Heart right ventricle (tissue), 16 donors: ENCODE measurements at regions of chr20 and their contacts with region 1.

Region 1: DNA sequence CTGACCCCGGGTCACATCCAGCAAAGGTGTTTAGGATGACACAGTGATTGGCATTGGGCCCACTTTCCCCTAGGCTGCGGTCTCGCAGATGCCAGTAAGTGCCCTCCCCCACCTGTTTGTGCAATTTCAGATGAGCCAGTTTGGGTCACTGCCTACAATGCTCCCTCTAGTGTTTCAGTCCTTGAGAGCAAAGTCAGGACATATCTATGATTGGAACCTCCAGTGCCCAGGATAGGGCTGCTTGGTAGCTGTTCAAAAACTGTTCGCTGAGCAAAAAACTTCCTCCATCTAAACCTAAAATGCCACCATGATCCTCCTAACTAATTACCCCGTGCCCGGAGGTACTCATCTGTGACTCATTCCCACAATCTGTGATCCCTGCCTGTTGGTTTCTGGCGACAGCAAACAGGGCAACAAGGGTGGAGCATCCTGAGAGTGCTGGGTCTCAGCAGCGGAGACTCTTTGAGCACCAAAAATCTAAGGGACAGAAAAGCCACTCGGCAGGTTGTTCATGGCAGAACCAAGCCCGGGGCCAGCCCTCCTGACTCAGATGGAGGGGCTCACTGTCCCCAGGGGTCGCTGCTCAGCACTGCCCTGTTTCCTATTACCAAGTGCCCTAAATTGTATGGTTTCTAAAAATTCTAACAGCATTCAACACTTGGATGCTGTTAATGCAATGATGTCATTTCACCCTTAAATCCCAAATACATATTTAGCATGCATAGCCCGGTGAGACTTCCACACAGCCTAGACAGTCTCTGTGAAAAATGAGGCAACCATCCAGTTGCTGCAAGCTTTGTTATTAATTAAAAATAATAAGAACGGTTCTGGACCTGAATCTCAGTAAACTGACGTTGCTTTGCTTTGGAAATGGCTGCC is 5.0 kb downstream of the VSX1 start:
- DNase-seq: no peak
- ATAC-seq: peak in 7 of 8 donors; percentile 35 to 78 (median 47)
- H3K4me3 ChIP-seq: peak overlapping the region in 9 of 10 donors; percentile 5 to 50 (median 36)
- H3K27ac ChIP-seq: no peak overlapping the region
- H3K4me1 ChIP-seq: peaks cover 2 to 28% (median 21%) of the 10 kb centered on the region in 9 donors
- H3K27me3 ChIP-seq: peaks cover 15 to 98% (median 68%) of the 10 kb centered on the region in 7 donors
- CTCF ChIP-seq: peak in 6 of 9 donors; percentile 19 to 44 (median 24)

Region 2: GRCh38 chr20:25145131-25145530 is 68.2 kb after region 1 on chr20:
- intact Hi-C with region 1: loop called in 1 of 10 experiments (anchors 2 kb)
- DNase-seq: peak in 1 of 2 donors; percentile 34
- ATAC-seq: peak in 6 of 8 donors; percentile 28 to 78 (median 42)
- H3K4me3 ChIP-seq: no peak overlapping the region
- H3K27ac ChIP-seq: no peak overlapping the region
- H3K4me1 ChIP-seq: peaks cover 4 to 12% (median 8%) of the 10 kb centered on the region in 9 donors
- H3K27me3 ChIP-seq: peaks cover 4 to 60% (median 39%) of the 10 kb centered on the region in 7 donors
- CTCF ChIP-seq: no peak

Region 3: GRCh38 chr20:25178563-25179438 is 101.8 kb after region 1 on chr20:
- intact Hi-C with region 1: loop called in 7 of 10 experiments (anchors 2 to 10 kb)
- DNase-seq: no peak
- ATAC-seq: peak; percentile 62 to 91 (median 78)
- H3K4me3 ChIP-seq: no peak overlapping the region
- H3K27ac ChIP-seq: no peak overlapping the region
- H3K4me1 ChIP-seq: peaks cover 0 to 9% (median 4%) of the 10 kb centered on the region in 9 donors
- H3K27me3 ChIP-seq: no peaks in the 10 kb centered on the region
- CTCF ChIP-seq: peak; percentile 59 to 80 (median 75)

Region 4: GRCh38 chr20:25254986-25255680 is 178.2 kb after region 1 on chr20:
- intact Hi-C with region 1: loop called in 1 of 10 experiments (anchors 10 kb)
- DNase-seq: peak; percentile 59 to 80
- ATAC-seq: peak; percentile 84 to 95 (median 92)
- H3K4me3 ChIP-seq: no peak overlapping the region
- H3K27ac ChIP-seq: peak overlapping the region; percentile 51 to 98 (median 90)
- H3K4me1 ChIP-seq: peaks cover 9 to 92% (median 69%) of the 10 kb centered on the region in 9 donors
- H3K27me3 ChIP-seq: no peaks in the 10 kb centered on the region
- CTCF ChIP-seq: peak in 2 of 9 donors; percentile 22 to 35

Region 5: DNA sequence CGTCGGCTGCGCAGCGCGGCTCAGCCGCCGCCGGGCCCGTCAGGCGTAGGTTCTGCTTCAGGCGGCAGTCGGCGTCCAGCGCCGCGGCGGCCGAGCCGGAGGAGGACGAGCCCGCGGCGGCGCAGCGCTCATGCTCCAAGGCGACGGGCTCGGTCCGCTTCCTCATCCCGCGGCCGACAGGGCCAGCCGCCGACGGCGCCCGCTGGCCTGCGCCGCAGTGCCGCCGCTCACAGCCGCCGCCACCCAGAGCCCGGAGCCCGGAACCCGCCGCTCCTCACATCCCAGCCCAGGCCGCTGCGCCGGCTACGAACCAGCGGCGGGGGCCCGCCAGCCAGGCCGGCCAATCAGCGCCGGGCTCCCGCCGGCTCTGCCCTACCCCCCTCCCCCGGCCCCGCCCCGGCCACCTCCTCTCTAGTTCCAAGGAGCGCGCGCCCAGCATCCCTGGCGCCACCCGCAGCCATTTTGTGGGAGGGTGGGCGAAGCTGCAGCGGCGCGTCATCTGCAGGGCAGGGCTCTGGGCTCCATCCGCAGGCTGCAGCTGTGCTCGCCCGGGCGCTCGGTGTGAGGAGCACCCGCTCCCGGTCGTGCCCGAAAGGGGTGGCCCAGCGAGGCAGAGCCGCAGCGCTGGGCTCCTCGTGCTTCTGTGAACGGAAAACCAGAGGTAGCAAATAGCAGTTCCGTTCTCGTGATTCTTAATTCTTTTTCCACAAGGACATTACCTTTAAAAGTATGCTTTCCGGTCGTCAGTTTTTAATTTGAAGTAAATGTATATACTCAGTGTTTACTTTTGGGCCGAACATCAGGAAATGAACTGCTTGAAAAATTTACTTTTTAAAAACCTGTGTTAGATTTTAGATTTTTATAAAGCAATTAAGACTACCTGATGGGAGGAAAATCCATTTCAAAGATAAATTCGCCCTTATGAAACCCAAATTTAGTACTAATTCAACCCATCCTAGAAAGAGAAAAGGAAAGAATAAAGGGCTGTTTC is 313.9 kb after region 1 on chr20 and contains the start of gene ABHD12:
- intact Hi-C with region 1: loop called in 2 of 10 experiments (anchors 5 to 10 kb)
- DNase-seq: peak; percentile 96 to 97
- ATAC-seq: peak; percentile 98 to 100 (median 99)
- H3K4me3 ChIP-seq: peak within 1 kb of the TSS; percentile 61 to 99 (median 91)
- H3K27ac ChIP-seq: peak within 1 kb of the TSS; percentile 31 to 94 (median 88)
- H3K4me1 ChIP-seq: peaks cover 0 to 20% (median 18%) of the 10 kb centered on the region in 9 donors
- H3K27me3 ChIP-seq: no peaks in the 10 kb centered on the region
- CTCF ChIP-seq: peak in 3 of 9 donors; percentile 12 to 28 (median 15)
- total RNA-seq, gene ABHD12: 21.1 to 41.3 (median 26.9) TPM

Region 6: GRCh38 chr20:25399037-25399430 is 322.1 kb after region 1 on chr20:
- intact Hi-C with region 1: loop called in 3 of 10 experiments (anchors 5 to 10 kb)
- DNase-seq: peak in 1 of 2 donors; percentile 31
- ATAC-seq: peak; percentile 75 to 92 (median 87)
- H3K4me3 ChIP-seq: no peak overlapping the region
- H3K27ac ChIP-seq: no peak overlapping the region
- H3K4me1 ChIP-seq: no peaks in the 10 kb centered on the region
- H3K27me3 ChIP-seq: no peaks in the 10 kb centered on the region
- CTCF ChIP-seq: peak; percentile 31 to 78 (median 63)

Region 7: DNA sequence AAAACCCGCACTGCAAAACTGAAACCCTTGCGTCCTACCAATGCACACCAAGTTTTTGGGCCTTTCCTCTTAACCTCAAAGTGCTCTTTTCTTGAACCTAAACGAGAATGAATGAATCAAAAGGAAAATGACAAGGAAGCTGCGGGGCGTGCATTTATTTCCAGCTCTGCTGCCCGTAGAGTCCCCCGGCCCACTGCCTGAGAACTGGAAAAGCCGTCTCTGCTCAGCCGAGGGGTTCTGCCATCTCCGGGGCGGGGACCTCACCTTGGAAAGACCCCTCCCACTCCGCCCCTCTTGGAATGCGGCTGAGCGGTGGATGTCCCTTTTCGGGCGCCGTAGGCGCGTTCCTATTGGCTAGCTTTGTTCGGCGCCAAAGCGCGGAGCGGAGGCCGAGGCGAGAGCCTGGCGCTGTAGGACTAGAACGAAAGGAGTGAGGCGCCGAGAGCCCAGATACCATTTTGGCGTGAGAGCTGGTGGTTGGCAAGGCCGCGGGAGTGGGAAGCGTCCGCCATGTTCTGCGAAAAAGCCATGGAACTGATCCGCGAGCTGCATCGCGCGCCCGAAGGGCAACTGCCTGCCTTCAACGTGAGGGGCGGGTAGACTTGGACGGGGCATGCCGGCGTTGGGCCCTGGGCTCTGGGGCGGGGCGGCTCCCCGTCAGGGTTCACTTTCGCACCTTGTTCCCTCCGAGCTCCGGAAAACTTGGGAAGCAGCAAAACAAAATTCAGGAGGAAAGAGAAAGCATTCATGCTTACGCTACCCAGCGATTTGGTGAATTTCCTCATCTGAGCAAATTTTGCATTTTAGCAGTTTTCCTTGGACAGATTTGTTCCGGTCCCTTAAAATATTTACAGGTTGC is 330.6 kb after region 1 on chr20 and contains the start of gene GINS1:
- intact Hi-C with region 1: loop called in 1 of 10 experiments (anchors 10 kb)
- DNase-seq: peak; percentile 83
- ATAC-seq: peak; percentile 93 to 97 (median 96)
- H3K4me3 ChIP-seq: peak within 1 kb of the TSS; percentile 30 to 84 (median 64)
- H3K27ac ChIP-seq: peak within 1 kb of the TSS in 4 of 10 donors; percentile 24 to 61 (median 38)
- H3K4me1 ChIP-seq: peaks cover 0 to 22% (median 9%) of the 10 kb centered on the region in 9 donors
- H3K27me3 ChIP-seq: no peaks in the 10 kb centered on the region
- CTCF ChIP-seq: no peak
- total RNA-seq, gene GINS1: 0.19 to 1.6 (median 0.64) TPM